ENCODE measurements at regions of chr9 and their contacts with region 1.

Region 1: GRCh38 chr9:124852829-124853531 is at the start of gene WDR38:
- DNase-seq: peak; percentile 74
- ATAC-seq: peak; percentile 84
- H3K4me3 ChIP-seq: peak within 1 kb of the TSS; percentile 72
- H3K27ac ChIP-seq: no peak within 1 kb of the TSS
- H3K4me1 ChIP-seq: no peaks in the 10 kb centered on the region
- H3K27me3 ChIP-seq: no peaks in the 10 kb centered on the region
- CTCF ChIP-seq: peak; percentile 96
- total RNA-seq, gene WDR38: not detected in 2 replicates

Region 2: GRCh38 chr9:123349691-123350480 is 1503.1 kb before region 1 on chr9:
- CTCF ChIA-PET with region 1: no interaction called
- POLR2A ChIA-PET with region 1: no interaction called
- intact Hi-C with region 1: no loop called
- DNase-seq: peak; percentile 69
- ATAC-seq: peak; percentile 68
- H3K4me3 ChIP-seq: no peak overlapping the region
- H3K27ac ChIP-seq: no peak overlapping the region
- H3K4me1 ChIP-seq: no peaks in the 10 kb centered on the region
- H3K27me3 ChIP-seq: no peaks in the 10 kb centered on the region
- CTCF ChIP-seq: peak; percentile 83

Region 3: DNA sequence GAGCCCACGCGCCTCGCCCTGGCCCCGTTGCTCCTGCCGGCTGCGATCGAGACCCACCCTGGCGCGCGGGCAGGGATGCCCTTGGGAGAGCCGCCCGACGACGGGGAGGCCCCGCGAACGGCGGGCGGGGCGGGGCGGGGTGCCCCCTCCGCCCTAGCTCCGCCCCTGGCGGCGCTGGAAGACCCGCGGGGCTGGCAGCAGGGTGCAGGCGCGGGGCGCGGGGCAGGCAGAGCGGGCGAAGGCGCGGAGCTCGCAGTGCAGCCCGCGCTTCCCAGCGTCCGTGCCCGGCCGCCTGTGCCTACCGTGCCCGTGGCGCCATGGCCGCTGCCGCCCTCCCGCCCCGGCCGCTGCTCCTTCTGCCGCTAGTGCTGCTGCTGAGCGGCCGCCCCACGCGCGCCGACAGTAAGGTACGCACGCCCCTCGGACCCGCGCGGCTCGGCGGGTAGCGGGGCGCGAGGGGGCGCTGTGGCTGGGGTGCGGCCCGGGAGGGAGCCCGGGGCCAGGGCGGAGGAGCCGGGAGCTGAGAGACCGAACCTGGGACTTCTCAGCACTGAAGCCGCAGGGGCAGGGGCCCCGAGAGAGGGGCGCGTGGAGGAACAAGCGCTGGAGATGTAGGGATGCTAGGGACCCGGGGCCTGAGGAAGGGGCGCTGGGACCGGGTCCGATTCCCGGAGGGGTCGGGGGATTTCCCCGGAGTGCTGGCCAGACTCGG is 75.9 kb before region 1 on chr9 and contains the start of gene OLFML2A:
- CTCF ChIA-PET with region 1: interaction called, 58 read pairs
- POLR2A ChIA-PET with region 1: no interaction called
- intact Hi-C with region 1: loop called (anchors 1 kb)
- DNase-seq: peak; percentile 30
- ATAC-seq: peak; percentile 7
- H3K4me3 ChIP-seq: peak within 1 kb of the TSS; percentile 68
- H3K27ac ChIP-seq: no peak within 1 kb of the TSS
- H3K4me1 ChIP-seq: peaks cover 23% of the 10 kb centered on the region
- H3K27me3 ChIP-seq: no peaks in the 10 kb centered on the region
- CTCF ChIP-seq: peak; percentile 50
- total RNA-seq, gene OLFML2A: 3.4 and 4.7 TPM in 2 replicates

Region 4: GRCh38 chr9:124812401-124813016 is 40.5 kb before region 1 on chr9:
- CTCF ChIA-PET with region 1: interaction called, 5 read pairs
- POLR2A ChIA-PET with region 1: no interaction called
- intact Hi-C with region 1: loop called (anchors 2 kb)
- DNase-seq: peak; percentile 84
- ATAC-seq: peak; percentile 84
- H3K4me3 ChIP-seq: no peak overlapping the region
- H3K27ac ChIP-seq: peak overlapping the region; percentile 88
- H3K4me1 ChIP-seq: peaks cover 34% of the 10 kb centered on the region
- H3K27me3 ChIP-seq: no peaks in the 10 kb centered on the region
- CTCF ChIP-seq: no peak

Region 5: GRCh38 chr9:124906966-124907365 is 54.0 kb after region 1 on chr9:
- CTCF ChIA-PET with region 1: no interaction called
- POLR2A ChIA-PET with region 1: no interaction called
- intact Hi-C with region 1: no loop called
- DNase-seq: no peak
- ATAC-seq: no peak
- H3K4me3 ChIP-seq: no peak overlapping the region
- H3K27ac ChIP-seq: no peak overlapping the region
- H3K4me1 ChIP-seq: no peaks in the 10 kb centered on the region
- H3K27me3 ChIP-seq: no peaks in the 10 kb centered on the region
- CTCF ChIP-seq: no peak